A549 (cell line): ENCODE measurements at regions of chr2 and their contacts with region 1.

Region 1: GRCh38 chr2:69565431-69565839 is 78.1 kb downstream of the AAK1 start:
- DNase-seq: peak; percentile 50 to 70
- ATAC-seq: peak; percentile 66 to 82; a peak in 5 of 6 replicates
- H3K4me3 ChIP-seq: no peak overlapping the region
- H3K27ac ChIP-seq: no peak overlapping the region
- H3K4me1 ChIP-seq: peaks cover 55% of the 10 kb centered on the region
- CTCF ChIP-seq: peak; percentile 80
- EP300 ChIP-seq: no peak
- POLR2A ChIP-seq: no peak
- RAD21 ChIP-seq: peak; percentile 45 to 54; a peak in 4 of 5 replicates

Region 2: GRCh38 chr2:69545477-69545932 is 19.9 kb before region 1 on chr2:
- CTCF ChIA-PET with region 1: interaction called, 16 read pairs
- POLR2A ChIA-PET with region 1: no interaction called
- DNase-seq: no peak
- ATAC-seq: no peak
- H3K4me3 ChIP-seq: no peak overlapping the region
- H3K27ac ChIP-seq: no peak overlapping the region
- H3K4me1 ChIP-seq: peaks cover 12% of the 10 kb centered on the region; the same call in 2 of the 3 replicates
- CTCF ChIP-seq: no peak
- EP300 ChIP-seq: no peak
- POLR2A ChIP-seq: no peak
- RAD21 ChIP-seq: no peak

Region 3: GRCh38 chr2:69597105-69597504 is 31.7 kb after region 1 on chr2:
- CTCF ChIA-PET with region 1: interaction called, 11 read pairs
- POLR2A ChIA-PET with region 1: no interaction called
- DNase-seq: no peak
- ATAC-seq: no peak
- H3K4me3 ChIP-seq: no peak overlapping the region
- H3K27ac ChIP-seq: no peak overlapping the region
- H3K4me1 ChIP-seq: peaks cover 24% of the 10 kb centered on the region
- CTCF ChIP-seq: no peak
- EP300 ChIP-seq: no peak
- POLR2A ChIP-seq: no peak
- RAD21 ChIP-seq: no peak

Region 4: GRCh38 chr2:69643602-69644505 is 78.4 kb after region 1 on chr2 and contains the start of gene AAK1:
- CTCF ChIA-PET with region 1: interaction called, 16 read pairs
- POLR2A ChIA-PET with region 1: interaction called, 3 read pairs
- DNase-seq: peak; percentile 91 to 94
- ATAC-seq: peak; percentile 88 to 91
- H3K4me3 ChIP-seq: peak within 1 kb of the TSS; percentile 88
- H3K27ac ChIP-seq: peak within 1 kb of the TSS; percentile 94 to 98
- H3K4me1 ChIP-seq: peaks cover 38% of the 10 kb centered on the region
- CTCF ChIP-seq: peak; percentile 27; the same call in 1 of the 3 replicates
- EP300 ChIP-seq: no peak
- POLR2A ChIP-seq: peak; percentile 69
- RAD21 ChIP-seq: peak in 1 of 2 experiments; percentile 2; a peak in 2 of 5 replicates
- polyA plus RNA-seq, gene AAK1: 25.7 and 26.9 TPM in 2 replicates